Right cardiac atrium (tissue), 5 donors: ENCODE measurements at regions of chr4 and their contacts with region 1.

Region 1: DNA sequence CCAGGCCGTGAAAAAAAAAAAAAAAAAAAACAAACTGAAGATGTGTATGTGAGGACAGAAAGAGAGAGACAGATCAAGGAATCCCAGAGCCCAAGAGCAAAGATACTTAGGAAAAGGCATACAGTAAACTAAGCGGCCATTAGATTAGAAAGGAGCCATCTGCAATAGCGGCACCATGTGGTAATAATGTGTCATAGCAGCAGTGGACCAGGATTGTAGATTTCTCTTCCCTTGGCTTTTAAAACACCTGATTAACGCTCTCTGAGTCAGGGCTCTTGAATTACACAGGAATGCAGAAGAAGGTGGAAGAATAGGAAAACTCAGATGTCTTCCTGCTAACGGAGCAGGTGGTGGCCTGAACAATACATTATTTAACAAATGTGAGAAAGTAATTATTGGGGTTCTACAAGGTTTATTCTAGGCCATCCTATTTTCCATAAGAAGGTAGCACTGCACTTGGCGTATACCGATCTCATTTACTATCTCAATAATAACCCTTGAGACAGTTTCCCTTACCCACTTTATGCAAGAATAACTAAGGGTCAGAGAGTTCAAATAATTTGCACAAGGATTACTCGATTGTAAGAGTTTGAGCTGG is 182.7 kb downstream of the KCNIP4 start:
- DNase-seq: no peak
- ATAC-seq: peak; percentile 24 to 60
- H3K4me3 ChIP-seq: no peak overlapping the region
- H3K27ac ChIP-seq: no peak overlapping the region
- H3K4me1 ChIP-seq: no peaks in the 10 kb centered on the region
- H3K27me3 ChIP-seq: no peaks in the 10 kb centered on the region

Region 2: DNA sequence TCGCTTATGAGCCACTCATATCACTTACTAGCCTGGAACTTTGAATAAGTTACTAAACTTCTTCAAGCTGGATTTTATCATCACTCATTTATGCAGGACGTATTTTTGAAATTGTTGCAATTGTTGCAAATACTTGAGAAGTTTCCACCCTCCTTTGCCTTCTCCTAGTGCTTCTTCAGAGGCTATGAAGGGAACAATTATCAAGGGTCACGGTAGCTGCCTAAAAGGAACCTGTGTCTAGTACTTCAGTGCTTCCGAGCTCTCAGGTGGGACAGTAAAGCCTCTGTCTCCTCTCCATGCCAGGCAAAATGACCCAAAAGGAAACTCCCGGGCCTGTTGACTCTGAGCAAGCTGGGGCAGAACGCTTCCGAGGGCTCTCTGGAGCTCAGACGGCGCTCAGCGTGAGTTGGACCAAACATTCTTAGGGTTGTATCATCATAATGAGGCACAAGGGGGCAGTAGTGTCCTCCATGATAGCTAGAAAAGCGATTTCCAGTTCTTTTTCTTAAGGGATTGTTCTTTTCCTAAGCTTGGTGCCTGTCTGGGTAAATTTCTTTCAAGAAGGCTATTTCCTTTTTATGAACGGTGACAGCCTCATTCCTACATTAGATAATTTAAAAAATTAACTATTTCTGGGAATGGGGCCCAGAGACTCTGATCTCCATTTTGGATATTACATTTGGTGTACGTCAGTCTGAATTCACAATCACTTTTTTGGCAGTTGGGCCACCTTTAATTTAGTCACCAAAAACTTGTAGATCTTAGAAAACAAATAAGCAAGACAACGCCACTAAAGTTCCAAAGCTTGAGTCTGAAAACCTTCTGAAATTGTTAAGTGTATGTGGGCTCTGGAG is 992.5 kb before region 1 on chr4:
- intact Hi-C with region 1: loop called in 1 of 4 experiments (anchors 10 kb)
- DNase-seq: no peak
- ATAC-seq: peak; percentile 45 to 66
- H3K4me3 ChIP-seq: no peak overlapping the region
- H3K27ac ChIP-seq: no peak overlapping the region
- H3K4me1 ChIP-seq: no peaks in the 10 kb centered on the region
- H3K27me3 ChIP-seq: no peaks in the 10 kb centered on the region

Region 3: GRCh38 chr4:21512353-21512752 is 253.6 kb before region 1 on chr4:
- intact Hi-C with region 1: loop called (anchors 5 to 10 kb)
- DNase-seq: no peak
- ATAC-seq: peak in 1 of 2 donors; percentile 57
- H3K4me3 ChIP-seq: no peak overlapping the region
- H3K27ac ChIP-seq: no peak overlapping the region
- H3K4me1 ChIP-seq: no peaks in the 10 kb centered on the region
- H3K27me3 ChIP-seq: no peaks in the 10 kb centered on the region

Region 4: GRCh38 chr4:21544415-21544814 is 221.5 kb before region 1 on chr4:
- intact Hi-C with region 1: no loop called
- DNase-seq: no peak
- ATAC-seq: peak in 1 of 2 donors; percentile 32
- H3K4me3 ChIP-seq: no peak overlapping the region
- H3K27ac ChIP-seq: no peak overlapping the region
- H3K4me1 ChIP-seq: no peaks in the 10 kb centered on the region
- H3K27me3 ChIP-seq: no peaks in the 10 kb centered on the region